Naive thymus-derived CD4-positive, alpha-beta T cell (primary cell): ENCODE measurements at regions of chr1 and their contacts with region 1.

Region 1: GRCh38 chr1:15304701-15305467 is 57.9 kb downstream of the FHAD1 start:
- DNase-seq: peak; percentile 3 to 73 (median 45)
- ATAC-seq: peak; percentile 58
- H3K4me3 ChIP-seq: no peak overlapping the region
- H3K4me3 Mint-ChIP-seq: peak overlapping the region in 1 of 10 donors; percentile 5
- H3K27ac ChIP-seq: no peak overlapping the region
- H3K27ac Mint-ChIP-seq: no peak overlapping the region
- H3K4me1 ChIP-seq: no peaks in the 10 kb centered on the region
- H3K4me1 Mint-ChIP-seq: peaks cover 0 to 5% (median 0%) of the 10 kb centered on the region in 7 donors
- H3K27me3 ChIP-seq: no peaks in the 10 kb centered on the region
- H3K27me3 Mint-ChIP-seq: peaks cover 0 to 4% (median 0%) of the 10 kb centered on the region in 5 donors

Region 2: GRCh38 chr1:15128520-15129313 is 176.2 kb before region 1 on chr1:
- CTCF ChIA-PET with region 1: interaction called, 5 read pairs
- POLR2A ChIA-PET with region 1: no interaction called
- intact Hi-C with region 1: loop called (anchors 1 kb)
- DNase-seq: peak in 8 of 9 donors; percentile 15 to 75 (median 42)
- ATAC-seq: peak; percentile 97
- H3K4me3 ChIP-seq: no peak overlapping the region
- H3K4me3 Mint-ChIP-seq: no peak overlapping the region
- H3K27ac ChIP-seq: no peak overlapping the region
- H3K27ac Mint-ChIP-seq: no peak overlapping the region
- H3K4me1 ChIP-seq: no peaks in the 10 kb centered on the region
- H3K4me1 Mint-ChIP-seq: no peaks in the 10 kb centered on the region
- H3K27me3 ChIP-seq: no peaks in the 10 kb centered on the region
- H3K27me3 Mint-ChIP-seq: peaks cover 11 to 28% (median 17%) of the 10 kb centered on the region in 5 donors